GM23248 (cell line): ENCODE measurements at regions of chr9 and their contacts with region 1.

Region 1: GRCh38 chr9:114108016-114108833 is 9.1 kb upstream of the KIF12 start:
- DNase-seq: peak; percentile 84
- H3K4me3 ChIP-seq: no peak overlapping the region
- H3K27ac ChIP-seq: no peak overlapping the region
- H3K4me1 ChIP-seq: peaks cover 23% of the 10 kb centered on the region
- H3K27me3 ChIP-seq: peaks cover 21% of the 10 kb centered on the region

Region 2: GRCh38 chr9:113474360-113475028 is 633.7 kb before region 1 on chr9:
- in situ Hi-C with region 1: no loop called
- DNase-seq: no peak
- H3K4me3 ChIP-seq: no peak overlapping the region
- H3K27ac ChIP-seq: no peak overlapping the region
- H3K4me1 ChIP-seq: no peaks in the 10 kb centered on the region
- H3K27me3 ChIP-seq: no peaks in the 10 kb centered on the region

Region 3: GRCh38 chr9:114047717-114048116 is 60.5 kb before region 1 on chr9:
- in situ Hi-C with region 1: no loop called
- DNase-seq: peak; percentile 30
- H3K4me3 ChIP-seq: no peak overlapping the region
- H3K27ac ChIP-seq: no peak overlapping the region
- H3K4me1 ChIP-seq: no peaks in the 10 kb centered on the region
- H3K27me3 ChIP-seq: no peaks in the 10 kb centered on the region

Region 4: GRCh38 chr9:114282926-114283325 is 174.7 kb after region 1 on chr9:
- in situ Hi-C with region 1: loop called (anchors 10 kb)
- DNase-seq: peak; percentile 83
- H3K4me3 ChIP-seq: no peak overlapping the region
- H3K27ac ChIP-seq: peak overlapping the region; percentile 21; the same call in 1 of the 2 replicates
- H3K4me1 ChIP-seq: peaks cover 15% of the 10 kb centered on the region
- H3K27me3 ChIP-seq: no peaks in the 10 kb centered on the region